ENCODE measurements at regions of chr12 and their contacts with region 1.

Region 1: GRCh38 chr12:81644503-81644902 is 114.6 kb downstream of the PPFIA2 start:
- DNase-seq: peak; percentile 16
- H3K4me3 Mint-ChIP-seq: no peak overlapping the region
- H3K27ac Mint-ChIP-seq: no peak overlapping the region
- H3K4me1 Mint-ChIP-seq: no peaks in the 10 kb centered on the region
- H3K27me3 Mint-ChIP-seq: no peaks in the 10 kb centered on the region
- CTCF ChIP-seq: peak; percentile 30

Region 2: DNA sequence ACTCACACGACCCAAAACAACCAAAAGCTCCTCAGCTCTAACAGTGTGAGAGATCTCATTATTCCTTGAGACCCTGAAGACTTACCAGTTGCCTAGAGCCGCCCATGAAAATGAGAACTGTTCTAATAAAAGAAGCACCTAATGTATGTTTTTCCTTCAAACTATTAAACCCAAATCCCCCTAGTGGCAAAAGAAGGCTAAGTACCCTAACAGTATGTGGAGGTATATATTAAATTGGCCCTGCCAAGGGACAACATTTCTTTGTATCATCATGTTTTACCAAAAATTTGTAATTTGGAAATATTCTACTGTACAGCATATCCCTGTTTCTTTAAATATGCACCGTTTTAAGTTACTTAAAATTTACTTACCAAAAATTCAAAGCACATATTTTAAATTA is 152.6 kb after region 1 on chr12:
- CTCF ChIA-PET with region 1: no interaction called
- intact Hi-C with region 1: loop called (anchors 2 kb)
- DNase-seq: no peak
- H3K4me3 Mint-ChIP-seq: no peak overlapping the region
- H3K27ac Mint-ChIP-seq: no peak overlapping the region
- H3K4me1 Mint-ChIP-seq: peaks cover 8% of the 10 kb centered on the region
- H3K27me3 Mint-ChIP-seq: no peaks in the 10 kb centered on the region
- CTCF ChIP-seq: peak; percentile 46

Region 3: GRCh38 chr12:81962126-81962856 is 317.8 kb after region 1 on chr12:
- CTCF ChIA-PET with region 1: no interaction called
- intact Hi-C with region 1: loop called (anchors 10 kb)
- DNase-seq: no peak
- H3K4me3 Mint-ChIP-seq: no peak overlapping the region
- H3K27ac Mint-ChIP-seq: no peak overlapping the region
- H3K4me1 Mint-ChIP-seq: no peaks in the 10 kb centered on the region
- H3K27me3 Mint-ChIP-seq: no peaks in the 10 kb centered on the region
- CTCF ChIP-seq: no peak

Region 4: DNA sequence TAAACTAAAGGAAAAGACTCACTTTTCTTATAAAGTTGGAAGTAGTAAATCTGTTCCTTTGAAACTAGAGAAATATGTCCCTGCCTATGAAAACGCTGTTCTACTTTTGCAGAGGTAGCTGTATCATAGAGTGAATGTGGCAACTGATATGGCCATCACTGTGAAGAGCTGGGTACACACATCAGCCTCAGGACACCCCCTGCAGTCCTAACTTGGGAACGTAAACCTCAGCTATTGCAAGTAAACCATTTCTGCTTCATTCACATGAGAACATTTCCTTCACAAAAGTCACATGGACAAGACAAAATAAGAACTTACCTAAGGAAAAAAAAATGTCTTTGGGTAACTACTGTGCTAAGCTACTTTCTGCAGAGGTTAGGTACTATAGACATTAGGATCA is 348.0 kb after region 1 on chr12:
- CTCF ChIA-PET with region 1: interaction called, 3 read pairs
- intact Hi-C with region 1: loop called (anchors 1 kb)
- DNase-seq: peak; percentile 59
- H3K4me3 Mint-ChIP-seq: no peak overlapping the region
- H3K27ac Mint-ChIP-seq: no peak overlapping the region
- H3K4me1 Mint-ChIP-seq: peaks cover 9% of the 10 kb centered on the region
- H3K27me3 Mint-ChIP-seq: no peaks in the 10 kb centered on the region
- CTCF ChIP-seq: no peak

Region 5: GRCh38 chr12:82326905-82327503 is 682.5 kb after region 1 on chr12:
- CTCF ChIA-PET with region 1: no interaction called
- intact Hi-C with region 1: loop called (anchors 1 kb)
- DNase-seq: no peak
- H3K4me3 Mint-ChIP-seq: no peak overlapping the region
- H3K27ac Mint-ChIP-seq: no peak overlapping the region
- H3K4me1 Mint-ChIP-seq: no peaks in the 10 kb centered on the region
- H3K27me3 Mint-ChIP-seq: no peaks in the 10 kb centered on the region
- CTCF ChIP-seq: peak; percentile 40

Region 6: GRCh38 chr12:82358200-82359114 is 714.0 kb after region 1 on chr12 and contains the starts of genes CCDC59 and METTL25:
- CTCF ChIA-PET with region 1: interaction called, 3 read pairs
- intact Hi-C with region 1: loop called (anchors 1 kb)
- DNase-seq: peak; percentile 98
- H3K4me3 Mint-ChIP-seq: peak within 1 kb of the TSS; percentile 94
- H3K27ac Mint-ChIP-seq: peak within 1 kb of the TSS; percentile 100
- H3K4me1 Mint-ChIP-seq: peaks cover 17% of the 10 kb centered on the region
- H3K27me3 Mint-ChIP-seq: no peaks in the 10 kb centered on the region
- CTCF ChIP-seq: peak; percentile 91
- total RNA-seq, gene CCDC59: 51.7 and 55.8 TPM in 2 replicates
- total RNA-seq, gene METTL25: 6.7 and 7.2 TPM in 2 replicates

Region 7: DNA sequence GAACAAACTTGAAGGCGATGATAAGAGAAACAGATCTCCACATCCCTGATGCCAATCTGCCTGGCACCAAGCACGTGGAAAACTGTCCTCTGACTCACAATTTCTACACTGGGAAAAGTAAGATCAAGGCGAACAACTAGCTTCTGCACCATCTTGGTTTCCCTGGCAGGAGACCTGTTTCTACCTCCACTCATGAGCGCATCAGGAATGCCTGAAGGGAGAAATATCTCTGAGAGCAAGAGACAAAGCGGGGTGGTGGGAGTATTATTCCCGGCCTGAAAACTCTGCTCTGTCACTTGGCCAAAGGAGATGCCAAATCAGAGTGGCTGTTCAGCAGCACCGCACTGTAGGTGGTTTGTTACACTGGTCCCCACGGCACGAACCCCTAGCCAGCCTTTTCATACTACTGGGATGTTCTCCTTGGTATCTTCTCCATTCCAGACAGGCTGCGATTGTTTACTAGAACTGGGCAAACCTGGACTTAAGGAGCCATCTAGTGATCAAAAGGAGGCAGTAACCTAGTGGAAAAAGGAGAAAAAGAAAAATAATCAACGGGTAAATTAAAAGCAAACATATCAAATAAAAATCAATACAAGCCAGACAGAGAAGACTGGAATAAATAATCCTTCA is 983.2 kb after region 1 on chr12:
- CTCF ChIA-PET with region 1: no interaction called
- intact Hi-C with region 1: loop called (anchors 5 kb)
- DNase-seq: peak; percentile 6
- H3K4me3 Mint-ChIP-seq: no peak overlapping the region
- H3K27ac Mint-ChIP-seq: no peak overlapping the region
- H3K4me1 Mint-ChIP-seq: peaks cover 5% of the 10 kb centered on the region
- H3K27me3 Mint-ChIP-seq: no peaks in the 10 kb centered on the region
- CTCF ChIP-seq: peak; percentile 64